ENCODE measurements at regions of chr7 and their contacts with region 1.

Region 1: GRCh38 chr7:84975586-84976185 is 211.2 kb downstream of the SEMA3D start:
- DNase-seq: no peak
- H3K4me3 ChIP-seq: no peak overlapping the region
- H3K27ac ChIP-seq: no peak overlapping the region
- H3K4me1 ChIP-seq: no peaks in the 10 kb centered on the region
- H3K27me3 ChIP-seq: no peaks in the 10 kb centered on the region
- CTCF ChIP-seq: no peak

Region 2: DNA sequence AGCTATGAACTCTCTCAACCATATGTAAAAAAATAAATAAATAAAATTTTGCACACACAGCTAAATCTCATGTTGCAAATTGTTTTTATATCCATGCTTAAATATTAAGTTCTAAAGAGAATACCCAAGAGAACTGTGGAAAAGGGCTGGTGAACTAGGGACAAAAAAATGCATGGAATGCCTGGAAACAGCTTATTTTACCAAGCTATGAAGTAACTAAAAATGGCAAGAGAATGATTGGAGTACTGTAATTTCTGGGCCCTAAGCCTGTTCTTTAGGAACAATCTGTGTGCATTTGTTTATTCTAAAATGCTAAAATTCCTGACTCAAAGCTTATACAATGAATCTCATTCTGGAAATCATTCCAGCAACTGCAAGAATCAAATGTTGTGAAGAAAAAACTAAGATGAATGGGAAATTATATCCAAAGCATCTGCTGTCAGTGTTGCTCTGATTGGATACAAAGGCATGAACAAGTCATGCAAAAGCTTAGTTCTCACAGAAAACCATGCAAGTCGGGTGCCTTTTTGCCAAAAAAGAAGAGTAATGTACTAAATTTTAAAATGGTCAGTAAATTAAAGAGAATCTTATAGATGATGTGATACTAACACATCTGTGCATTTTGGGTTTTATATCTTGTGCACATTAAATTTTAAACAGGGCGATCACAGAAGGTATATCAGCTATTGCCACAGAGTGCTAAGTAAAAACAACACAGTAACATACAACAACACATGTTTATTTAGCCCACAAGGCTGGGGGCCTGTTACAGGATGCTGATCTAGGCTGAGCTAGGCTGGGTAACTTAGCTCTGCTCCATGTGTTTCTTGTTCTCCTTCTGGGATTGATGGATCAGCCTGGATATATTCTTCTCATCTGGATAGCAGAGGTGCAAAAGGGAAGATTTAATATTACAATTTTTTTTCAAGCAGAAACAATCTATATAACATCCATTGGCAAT is 327.6 kb before region 1 on chr7:
- CTCF ChIA-PET with region 1: no interaction called
- POLR2A ChIA-PET with region 1: interaction called, 13 read pairs
- intact Hi-C with region 1: no loop called
- DNase-seq: no peak
- H3K4me3 ChIP-seq: no peak overlapping the region
- H3K27ac ChIP-seq: no peak overlapping the region
- H3K4me1 ChIP-seq: no peaks in the 10 kb centered on the region
- H3K27me3 ChIP-seq: no peaks in the 10 kb centered on the region
- CTCF ChIP-seq: no peak

Region 3: DNA sequence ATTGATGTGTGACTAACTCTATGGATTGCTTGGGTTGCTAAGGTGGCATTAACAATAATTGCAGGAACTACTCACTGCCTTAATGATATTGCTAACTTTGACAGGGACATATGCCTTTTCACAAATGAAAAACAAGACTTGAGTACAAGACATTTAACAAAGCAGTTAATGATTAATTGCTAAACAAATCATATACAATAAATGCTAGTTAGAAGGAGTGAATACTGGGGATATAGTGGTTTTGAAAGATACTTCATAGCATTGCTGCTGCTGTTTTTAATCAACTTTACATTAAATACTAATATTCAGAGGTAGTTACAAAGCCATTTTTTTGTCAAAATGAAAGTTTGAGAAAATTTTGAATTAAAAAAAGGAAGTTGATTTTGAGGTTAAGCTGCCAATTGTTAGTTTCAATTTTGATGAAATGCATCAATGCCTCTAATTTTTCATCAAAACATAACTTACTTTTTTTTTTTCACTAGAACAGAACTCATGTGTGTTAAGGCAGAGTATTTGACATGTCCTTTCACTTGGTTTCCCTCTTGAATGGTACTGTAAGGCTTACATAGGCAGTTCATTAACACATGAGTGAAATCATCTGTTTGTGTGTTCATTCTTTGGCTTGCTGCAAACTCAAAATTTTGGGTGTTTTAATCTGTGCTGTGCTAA is 317.4 kb after region 1 on chr7:
- CTCF ChIA-PET with region 1: no interaction called
- POLR2A ChIA-PET with region 1: no interaction called
- intact Hi-C with region 1: no loop called
- DNase-seq: no peak
- H3K4me3 ChIP-seq: no peak overlapping the region
- H3K27ac ChIP-seq: no peak overlapping the region
- H3K4me1 ChIP-seq: no peaks in the 10 kb centered on the region
- H3K27me3 ChIP-seq: no peaks in the 10 kb centered on the region
- CTCF ChIP-seq: no peak

Measured in PC-9 (cell line).